ENCODE measurements at regions of chr19 and their contacts with region 1.

Region 1: DNA sequence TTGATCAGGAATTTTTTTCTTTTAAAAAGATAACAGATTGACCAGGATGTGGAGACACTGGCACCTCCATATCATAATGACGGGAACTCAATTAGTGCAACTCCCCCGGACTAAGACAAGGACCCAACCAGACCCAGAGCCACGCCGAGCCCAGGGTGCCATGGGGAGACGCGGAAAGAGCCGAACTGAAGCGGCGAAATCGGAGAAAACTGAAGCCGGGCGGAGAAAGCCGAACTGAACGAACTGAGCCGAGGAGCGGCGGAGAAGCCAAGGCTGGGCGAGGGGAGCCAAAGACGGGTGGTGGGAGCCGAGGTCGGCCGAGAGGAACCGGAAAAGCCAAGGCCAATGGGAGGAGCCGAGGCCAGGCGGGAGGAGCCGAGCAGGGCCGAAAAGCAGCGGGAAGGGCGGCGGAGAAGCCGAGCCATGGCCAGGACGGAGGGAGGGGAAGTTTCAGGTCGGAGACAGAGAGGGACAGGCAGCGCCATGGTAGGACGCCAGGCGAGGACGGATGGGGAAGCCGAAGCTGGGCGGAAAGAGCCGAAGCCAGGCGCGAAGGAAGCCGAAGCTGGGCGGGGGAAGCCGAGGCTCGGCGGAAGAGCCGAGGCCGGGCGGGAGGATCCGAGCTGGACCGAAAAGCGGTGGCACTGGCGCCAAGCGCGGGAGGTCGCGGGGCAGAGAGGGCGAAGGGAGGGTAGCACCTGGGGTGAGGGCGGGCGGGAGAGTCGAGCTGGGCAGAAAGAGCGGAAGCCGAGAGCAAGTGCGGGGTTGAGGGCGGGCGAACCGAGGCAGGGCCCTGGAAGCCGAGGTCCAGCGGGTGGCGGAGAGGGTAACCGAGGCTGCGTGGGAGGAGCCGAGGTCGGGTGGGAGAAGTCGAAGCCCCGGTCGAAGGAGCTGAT is 29.4 kb downstream of the ZNF557 start:
- DNase-seq: peak; percentile 86
- ATAC-seq: peak; percentile 92
- H3K4me3 Mint-ChIP-seq: peak overlapping the region; percentile 92
- H3K27ac Mint-ChIP-seq: peak overlapping the region; percentile 95
- H3K4me1 Mint-ChIP-seq: peaks cover 18% of the 10 kb centered on the region
- H3K27me3 Mint-ChIP-seq: no peaks in the 10 kb centered on the region
- CTCF ChIP-seq: no peak

Region 2: GRCh38 chr19:6952956-6953355 is 146.0 kb before region 1 on chr19:
- CTCF ChIA-PET with region 1: no interaction called
- POLR2A ChIA-PET with region 1: no interaction called
- intact Hi-C with region 1: no loop called
- DNase-seq: no peak
- ATAC-seq: no peak
- H3K4me3 Mint-ChIP-seq: no peak overlapping the region
- H3K27ac Mint-ChIP-seq: no peak overlapping the region
- H3K4me1 Mint-ChIP-seq: no peaks in the 10 kb centered on the region
- H3K27me3 Mint-ChIP-seq: peaks cover 22% of the 10 kb centered on the region
- CTCF ChIP-seq: no peak

Region 3: DNA sequence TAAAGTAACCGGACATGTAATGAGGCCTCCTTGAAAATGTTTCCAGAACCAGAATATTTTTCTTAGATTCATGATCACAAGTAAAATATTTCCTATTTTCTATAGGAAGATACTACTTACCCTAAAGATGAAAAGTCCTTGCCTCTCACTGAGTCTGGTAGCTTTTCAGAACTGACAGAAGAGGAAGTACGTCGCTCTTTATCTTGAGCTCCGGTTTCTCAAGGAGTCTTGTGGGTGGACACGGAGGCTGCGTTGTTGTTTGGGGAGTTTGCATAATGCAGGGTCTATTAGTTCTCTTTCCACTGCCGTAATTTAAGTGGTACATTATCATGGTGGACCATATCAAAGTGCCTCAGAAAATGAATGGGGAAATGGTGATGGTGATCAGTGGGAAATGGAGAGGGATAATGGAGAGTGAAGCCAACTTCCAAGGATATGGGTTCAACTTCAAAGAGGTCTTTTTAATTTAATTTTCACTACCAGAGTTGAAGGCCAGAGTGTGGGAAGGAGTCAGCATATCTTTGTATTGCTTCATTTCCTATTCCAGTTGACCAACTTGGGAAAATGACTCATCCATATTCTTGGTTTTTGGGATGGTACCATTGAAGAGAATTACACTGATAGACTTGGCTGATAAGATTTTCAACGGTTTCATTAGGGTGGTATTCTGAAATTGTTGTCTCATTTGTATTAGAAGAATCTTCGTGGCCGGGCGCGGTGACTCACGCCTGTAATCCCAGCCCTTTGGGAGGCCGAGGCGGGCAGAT is 101.1 kb before region 1 on chr19:
- CTCF ChIA-PET with region 1: no interaction called
- POLR2A ChIA-PET with region 1: no interaction called
- intact Hi-C with region 1: no loop called
- DNase-seq: no peak
- ATAC-seq: no peak
- H3K4me3 Mint-ChIP-seq: no peak overlapping the region
- H3K27ac Mint-ChIP-seq: no peak overlapping the region
- H3K4me1 Mint-ChIP-seq: peaks cover 4% of the 10 kb centered on the region
- H3K27me3 Mint-ChIP-seq: peaks cover 18% of the 10 kb centered on the region
- CTCF ChIP-seq: no peak

Region 4: GRCh38 chr19:7152568-7152967 is 53.6 kb after region 1 on chr19:
- CTCF ChIA-PET with region 1: no interaction called
- POLR2A ChIA-PET with region 1: no interaction called
- intact Hi-C with region 1: loop called (anchors 2 kb)
- DNase-seq: no peak
- ATAC-seq: no peak
- H3K4me3 Mint-ChIP-seq: no peak overlapping the region
- H3K27ac Mint-ChIP-seq: no peak overlapping the region
- H3K4me1 Mint-ChIP-seq: peaks cover 5% of the 10 kb centered on the region
- H3K27me3 Mint-ChIP-seq: no peaks in the 10 kb centered on the region
- CTCF ChIP-seq: no peak

Region 5: DNA sequence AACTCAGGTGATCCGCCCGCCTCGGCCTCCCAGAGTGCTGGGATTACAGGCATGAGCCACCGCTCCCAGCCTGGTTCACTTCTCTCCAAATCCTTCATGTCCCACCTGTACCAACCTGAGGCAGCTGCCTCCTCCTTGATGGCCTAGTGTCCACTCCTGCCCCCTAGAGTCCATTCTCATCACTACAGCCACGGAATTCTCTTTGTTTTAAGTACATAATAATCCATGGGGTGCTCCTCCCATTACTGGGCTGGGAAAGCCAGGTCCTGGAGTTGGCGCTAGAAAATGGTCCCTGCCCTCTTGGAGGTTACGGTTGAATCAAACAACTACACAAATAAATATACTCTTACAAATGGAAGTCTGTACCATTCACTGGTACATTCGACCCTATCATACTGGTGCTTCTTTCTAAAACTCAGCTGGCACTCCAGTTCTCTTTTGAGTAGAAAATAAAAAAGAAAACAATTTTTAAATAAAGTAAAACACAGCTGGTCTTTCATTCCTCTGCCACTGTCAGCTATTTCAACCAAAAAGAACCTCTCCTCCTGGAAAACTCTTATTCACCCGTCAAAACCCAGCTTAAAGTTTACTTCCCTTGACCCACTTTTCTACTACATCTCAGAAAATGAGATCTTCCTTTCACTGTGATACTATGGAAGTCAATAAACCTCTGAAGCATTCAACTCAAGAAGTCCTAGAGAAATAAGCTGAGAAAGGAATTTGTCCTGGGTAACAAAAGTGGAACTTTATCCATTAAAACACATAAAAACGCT is 227.3 kb after region 1 on chr19:
- CTCF ChIA-PET with region 1: interaction called, 11 read pairs
- POLR2A ChIA-PET with region 1: interaction called, 4 read pairs
- intact Hi-C with region 1: no loop called
- DNase-seq: no peak
- ATAC-seq: no peak
- H3K4me3 Mint-ChIP-seq: no peak overlapping the region
- H3K27ac Mint-ChIP-seq: peak overlapping the region; percentile 25
- H3K4me1 Mint-ChIP-seq: peaks cover 7% of the 10 kb centered on the region
- H3K27me3 Mint-ChIP-seq: no peaks in the 10 kb centered on the region
- CTCF ChIP-seq: no peak

Region 6: DNA sequence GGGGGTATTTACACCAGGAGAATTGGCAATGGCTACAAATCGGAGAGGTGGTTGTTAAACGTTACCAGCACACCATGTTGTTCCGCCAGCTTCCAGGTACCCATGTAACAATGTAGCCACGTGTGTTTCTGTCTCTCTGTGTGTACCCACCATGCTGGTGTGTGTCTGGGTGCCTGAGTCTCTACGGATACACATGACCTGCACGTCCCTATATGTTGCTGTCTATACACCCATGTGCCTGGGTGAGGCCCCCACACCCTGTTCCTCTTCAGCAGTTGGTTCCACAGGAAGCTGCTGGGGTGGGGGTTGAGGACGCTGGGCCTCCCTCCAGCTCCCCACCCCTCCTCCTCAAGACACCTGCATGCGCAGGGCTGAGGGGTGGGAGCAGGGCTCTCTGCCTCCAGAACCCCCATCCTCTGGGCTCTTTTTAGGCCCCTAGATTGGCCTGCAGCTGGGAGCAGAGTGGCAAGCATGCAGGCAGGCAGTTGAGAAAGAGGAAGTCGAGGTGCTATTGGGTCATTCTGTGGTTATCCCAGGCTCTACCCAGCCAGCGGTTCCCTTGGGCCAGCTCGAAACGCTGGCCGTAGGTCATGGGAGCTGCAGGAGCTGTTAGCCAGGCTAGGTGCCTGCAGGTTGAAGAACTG is 249.8 kb after region 1 on chr19 and contains the start of gene ARHGEF18:
- CTCF ChIA-PET with region 1: interaction called, 3 read pairs
- POLR2A ChIA-PET with region 1: interaction called, 11 read pairs
- intact Hi-C with region 1: no loop called
- DNase-seq: peak; percentile 56
- ATAC-seq: peak; percentile 36
- H3K4me3 Mint-ChIP-seq: peak within 1 kb of the TSS; percentile 87
- H3K27ac Mint-ChIP-seq: peak within 1 kb of the TSS; percentile 95
- H3K4me1 Mint-ChIP-seq: peaks cover 90% of the 10 kb centered on the region
- H3K27me3 Mint-ChIP-seq: no peaks in the 10 kb centered on the region
- CTCF ChIP-seq: no peak
- total RNA-seq, gene ARHGEF18: 45.8 and 51.9 TPM in 2 replicates

Region 7: GRCh38 chr19:7799640-7800355 is 700.8 kb after region 1 on chr19:
- CTCF ChIA-PET with region 1: interaction called, 3 read pairs
- POLR2A ChIA-PET with region 1: no interaction called
- intact Hi-C with region 1: loop called (anchors 2 kb)
- DNase-seq: peak; percentile 35
- ATAC-seq: peak; percentile 76
- H3K4me3 Mint-ChIP-seq: peak overlapping the region; percentile 66
- H3K27ac Mint-ChIP-seq: peak overlapping the region; percentile 46
- H3K4me1 Mint-ChIP-seq: peaks cover 13% of the 10 kb centered on the region
- H3K27me3 Mint-ChIP-seq: peaks cover 13% of the 10 kb centered on the region
- CTCF ChIP-seq: no peak

Measured in activated B cell treated with CpG ODN at 0.5 μM for 24 hours (primary cell).